ENCODE measurements at regions of chr14 and their contacts with region 1.

Region 1: GRCh38 chr14:58864751-58865513 is 227.2 kb downstream of the DACT1 start:
- DNase-seq: no peak
- CTCF ChIP-seq: no peak

Region 2: DNA sequence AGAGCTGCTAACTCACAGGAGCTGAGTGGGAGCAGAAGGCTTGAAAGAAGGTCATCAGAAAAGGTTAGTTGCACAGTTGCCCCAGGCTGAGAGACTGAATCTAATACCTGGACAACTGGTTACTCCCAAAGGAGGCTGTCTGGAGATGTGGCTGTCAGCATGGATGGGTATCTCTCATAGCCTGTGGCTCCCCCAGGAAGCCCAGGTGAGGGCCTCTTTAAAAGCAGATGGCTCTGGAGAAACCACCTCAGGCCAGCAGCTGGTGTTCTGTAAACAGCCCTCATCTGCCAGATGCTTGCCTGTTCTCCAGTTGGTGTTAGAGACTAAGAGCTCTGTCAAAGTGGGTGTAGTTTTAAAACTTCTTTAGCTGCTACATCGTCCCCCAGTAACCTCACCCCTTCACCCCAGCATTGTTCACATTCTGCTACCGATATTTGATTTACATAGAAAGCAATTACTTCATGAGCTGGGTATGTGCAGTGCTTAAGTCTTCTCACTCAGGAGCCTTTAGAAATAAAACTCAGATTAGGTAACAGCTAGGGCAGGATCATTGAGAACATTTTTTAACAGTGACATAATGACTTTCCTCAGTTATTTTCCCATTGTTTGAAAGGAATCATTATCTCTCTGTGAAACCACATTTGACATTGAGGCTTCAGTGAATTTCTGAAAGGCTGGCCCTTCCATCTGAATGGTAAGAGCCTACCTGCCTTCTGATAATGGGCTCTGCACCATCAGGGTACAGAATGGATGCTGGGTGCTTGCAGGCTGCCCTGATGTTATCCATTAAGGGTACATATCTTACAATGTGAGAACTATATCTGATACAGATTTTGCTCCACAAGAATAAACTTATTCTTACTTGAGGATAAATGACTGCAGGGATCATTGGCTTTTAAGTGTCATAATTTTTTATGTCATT is 201.2 kb before region 1 on chr14:
- CTCF ChIA-PET with region 1: no interaction called
- POLR2A ChIA-PET with region 1: no interaction called
- DNase-seq: no peak
- CTCF ChIP-seq: no peak

Region 3: GRCh38 chr14:58876608-58877007 is 11.7 kb after region 1 on chr14:
- CTCF ChIA-PET with region 1: interaction called, 11 read pairs
- POLR2A ChIA-PET with region 1: no interaction called
- DNase-seq: no peak
- CTCF ChIP-seq: no peak